CD8-positive, alpha-beta T cell (primary cell): ENCODE measurements at regions of chr6 and their contacts with region 1.

Region 1: GRCh38 chr6:102717737-102718456 is 1324.4 kb downstream of the GRIK2 start:
- DNase-seq: no peak
- ATAC-seq: no peak
- H3K4me3 ChIP-seq: no peak overlapping the region
- H3K4me3 Mint-ChIP-seq: no peak overlapping the region
- H3K27ac ChIP-seq: no peak overlapping the region
- H3K27ac Mint-ChIP-seq: no peak overlapping the region
- H3K4me1 ChIP-seq: no peaks in the 10 kb centered on the region
- H3K4me1 Mint-ChIP-seq: no peaks in the 10 kb centered on the region
- H3K27me3 ChIP-seq: no peaks in the 10 kb centered on the region
- H3K27me3 Mint-ChIP-seq: no peaks in the 10 kb centered on the region
- CTCF ChIP-seq: no peak

Region 2: GRCh38 chr6:102619585-102619984 is 98.3 kb before region 1 on chr6:
- CTCF ChIA-PET with region 1: no interaction called
- POLR2A ChIA-PET with region 1: no interaction called
- intact Hi-C with region 1: no loop called
- DNase-seq: no peak
- ATAC-seq: no peak
- H3K4me3 ChIP-seq: no peak overlapping the region
- H3K4me3 Mint-ChIP-seq: no peak overlapping the region
- H3K27ac ChIP-seq: no peak overlapping the region
- H3K27ac Mint-ChIP-seq: no peak overlapping the region
- H3K4me1 ChIP-seq: no peaks in the 10 kb centered on the region
- H3K4me1 Mint-ChIP-seq: no peaks in the 10 kb centered on the region
- H3K27me3 ChIP-seq: no peaks in the 10 kb centered on the region
- H3K27me3 Mint-ChIP-seq: no peaks in the 10 kb centered on the region
- CTCF ChIP-seq: no peak

Region 3: GRCh38 chr6:102793752-102794151 is 75.9 kb after region 1 on chr6:
- CTCF ChIA-PET with region 1: no interaction called
- POLR2A ChIA-PET with region 1: no interaction called
- intact Hi-C with region 1: no loop called
- DNase-seq: no peak
- ATAC-seq: no peak
- H3K4me3 ChIP-seq: no peak overlapping the region
- H3K4me3 Mint-ChIP-seq: no peak overlapping the region
- H3K27ac ChIP-seq: no peak overlapping the region
- H3K27ac Mint-ChIP-seq: no peak overlapping the region
- H3K4me1 ChIP-seq: no peaks in the 10 kb centered on the region
- H3K4me1 Mint-ChIP-seq: no peaks in the 10 kb centered on the region
- H3K27me3 ChIP-seq: no peaks in the 10 kb centered on the region
- H3K27me3 Mint-ChIP-seq: no peaks in the 10 kb centered on the region
- CTCF ChIP-seq: no peak

Region 4: DNA sequence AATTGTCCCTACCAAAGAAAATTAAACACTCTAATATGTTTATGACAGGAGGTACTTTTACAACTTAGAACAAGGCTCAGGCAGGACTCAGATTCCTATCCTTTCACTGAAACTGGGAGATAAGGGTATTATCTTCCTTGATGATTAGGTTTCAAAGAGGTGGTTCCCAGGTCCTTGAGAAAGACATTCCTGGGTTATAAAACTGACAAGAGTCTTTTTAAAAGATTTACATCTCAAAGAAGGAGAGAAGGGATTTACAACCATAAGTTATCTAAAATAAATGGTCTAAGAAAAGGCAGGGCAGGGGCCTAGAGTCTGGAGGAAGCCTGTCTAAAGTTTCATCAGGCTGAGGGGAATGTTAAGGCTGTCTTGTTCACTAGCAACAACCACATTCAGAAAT is 649.3 kb after region 1 on chr6:
- CTCF ChIA-PET with region 1: no interaction called
- POLR2A ChIA-PET with region 1: no interaction called
- intact Hi-C with region 1: no loop called
- DNase-seq: no peak
- ATAC-seq: no peak
- H3K4me3 ChIP-seq: no peak overlapping the region
- H3K4me3 Mint-ChIP-seq: no peak overlapping the region
- H3K27ac ChIP-seq: no peak overlapping the region
- H3K27ac Mint-ChIP-seq: no peak overlapping the region
- H3K4me1 ChIP-seq: no peaks in the 10 kb centered on the region
- H3K4me1 Mint-ChIP-seq: no peaks in the 10 kb centered on the region
- H3K27me3 ChIP-seq: no peaks in the 10 kb centered on the region
- H3K27me3 Mint-ChIP-seq: no peaks in the 10 kb centered on the region
- CTCF ChIP-seq: no peak

Region 5: GRCh38 chr6:104349191-104349590 is 1631.3 kb after region 1 on chr6:
- CTCF ChIA-PET with region 1: no interaction called
- POLR2A ChIA-PET with region 1: no interaction called
- intact Hi-C with region 1: loop called in 1 of 2 experiments (anchors 5 kb)
- DNase-seq: no peak
- ATAC-seq: no peak
- H3K4me3 ChIP-seq: no peak overlapping the region
- H3K4me3 Mint-ChIP-seq: no peak overlapping the region
- H3K27ac ChIP-seq: no peak overlapping the region
- H3K27ac Mint-ChIP-seq: no peak overlapping the region
- H3K4me1 ChIP-seq: no peaks in the 10 kb centered on the region
- H3K4me1 Mint-ChIP-seq: no peaks in the 10 kb centered on the region
- H3K27me3 ChIP-seq: no peaks in the 10 kb centered on the region
- H3K27me3 Mint-ChIP-seq: no peaks in the 10 kb centered on the region
- CTCF ChIP-seq: no peak